Natural killer cell (primary cell): ENCODE measurements at regions of chr10 and their contacts with region 1.

Region 1: GRCh38 chr10:7424315-7424714 is 13.5 kb upstream of the SFMBT2 start:
- DNase-seq: peak; percentile 31 to 52
- ATAC-seq: peak; percentile 78 to 97 (median 96)
- H3K4me3 ChIP-seq: no peak overlapping the region
- H3K4me3 Mint-ChIP-seq: no peak overlapping the region
- H3K27ac ChIP-seq: no peak overlapping the region
- H3K27ac Mint-ChIP-seq: peak overlapping the region in 1 of 2 donors; percentile 5
- H3K4me1 ChIP-seq: no peaks in the 10 kb centered on the region
- H3K4me1 Mint-ChIP-seq: peaks cover 10% of the 10 kb centered on the region in 2 donors
- H3K27me3 ChIP-seq: no peaks in the 10 kb centered on the region
- H3K27me3 Mint-ChIP-seq: no peaks in the 10 kb centered on the region
- CTCF ChIP-seq: no peak

Region 2: GRCh38 chr10:7471720-7472367 is 47.5 kb after region 1 on chr10:
- intact Hi-C with region 1: no loop called
- DNase-seq: peak in 1 of 2 donors; percentile 45
- ATAC-seq: peak; percentile 62 to 76 (median 72)
- H3K4me3 ChIP-seq: peak overlapping the region; percentile 10
- H3K4me3 Mint-ChIP-seq: peak overlapping the region; percentile 90
- H3K27ac ChIP-seq: peak overlapping the region; percentile 1
- H3K27ac Mint-ChIP-seq: peak overlapping the region; percentile 74 to 82
- H3K4me1 ChIP-seq: peaks cover 6% of the 10 kb centered on the region
- H3K4me1 Mint-ChIP-seq: peaks cover 16 to 19% of the 10 kb centered on the region in 2 donors
- H3K27me3 ChIP-seq: no peaks in the 10 kb centered on the region
- H3K27me3 Mint-ChIP-seq: no peaks in the 10 kb centered on the region
- CTCF ChIP-seq: no peak

Region 3: DNA sequence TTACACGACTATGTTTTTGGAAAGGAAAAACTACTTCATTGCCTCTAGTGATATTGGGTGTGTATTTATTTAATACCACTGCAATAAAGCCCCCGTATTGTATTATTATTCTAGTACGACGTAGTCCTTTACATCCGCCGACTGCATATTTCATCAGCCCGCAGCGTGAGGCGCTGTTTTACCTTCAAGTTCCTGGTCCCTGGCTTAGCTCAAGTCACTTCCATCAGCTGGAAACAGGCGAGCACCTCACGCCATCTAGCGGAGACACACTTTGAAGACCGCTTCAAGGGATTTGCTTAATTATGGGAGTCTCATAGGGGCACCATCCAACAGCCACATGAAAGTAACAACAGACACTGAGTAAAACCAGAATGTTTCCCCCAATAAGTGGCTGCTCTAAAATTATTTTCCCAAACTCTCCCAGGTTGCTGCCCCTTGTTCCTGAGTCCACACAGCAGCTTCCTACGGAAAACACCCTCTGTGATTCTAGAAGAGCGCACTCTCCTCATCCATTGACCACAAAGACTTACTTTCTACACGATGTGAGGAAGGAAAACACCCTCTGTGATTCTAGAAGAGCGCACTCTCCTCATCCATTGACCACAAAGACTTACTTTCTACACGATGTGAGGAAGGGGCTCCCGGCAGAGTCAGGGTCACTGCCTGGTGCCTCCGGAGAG is 263.1 kb after region 1 on chr10:
- intact Hi-C with region 1: loop called (anchors 2 kb)
- DNase-seq: peak; percentile 44 to 89
- ATAC-seq: peak; percentile 81 to 98 (median 90)
- H3K4me3 ChIP-seq: no peak overlapping the region
- H3K4me3 Mint-ChIP-seq: no peak overlapping the region
- H3K27ac ChIP-seq: no peak overlapping the region
- H3K27ac Mint-ChIP-seq: no peak overlapping the region
- H3K4me1 ChIP-seq: no peaks in the 10 kb centered on the region
- H3K4me1 Mint-ChIP-seq: peaks cover 5% of the 10 kb centered on the region in 2 donors
- H3K27me3 ChIP-seq: no peaks in the 10 kb centered on the region
- H3K27me3 Mint-ChIP-seq: peaks cover 40 to 45% of the 10 kb centered on the region in 2 donors
- CTCF ChIP-seq: peak; percentile 70